AG04450 (cell line): ENCODE measurements at regions of chr4 and their contacts with region 1.

Region 1: DNA sequence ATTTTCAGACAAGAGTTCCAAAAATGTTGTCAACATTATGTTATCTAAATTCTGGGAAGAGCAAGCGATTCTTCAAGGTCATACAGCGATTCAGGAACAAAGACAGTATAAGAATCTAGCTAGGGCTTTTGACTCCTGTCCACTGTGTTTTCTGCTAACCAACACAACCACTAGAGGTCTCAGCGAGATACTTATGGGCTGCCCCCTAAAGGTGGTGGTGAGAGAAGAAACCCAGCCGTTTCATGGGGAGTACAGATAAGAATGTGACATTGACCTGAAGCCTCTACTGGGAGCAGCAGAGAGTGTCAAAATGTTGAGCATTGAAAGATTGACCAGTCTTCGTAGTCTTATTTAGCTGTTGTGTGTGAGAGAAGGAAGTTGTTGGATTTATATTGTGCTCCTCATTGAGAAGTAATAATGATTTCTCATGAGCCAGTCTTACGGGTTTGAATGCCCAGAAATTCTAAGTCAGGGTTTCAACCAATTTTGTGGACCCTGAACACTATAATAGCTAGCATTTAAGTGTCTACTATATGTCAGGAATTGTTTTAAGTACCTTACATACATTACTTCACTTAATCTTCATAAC is 168.3 kb downstream of the SPRY1 start:
- DNase-seq: peak; percentile 27
- H3K4me3 ChIP-seq: no peak overlapping the region
- H3K27ac ChIP-seq: no peak overlapping the region
- H3K27me3 ChIP-seq: no peaks in the 10 kb centered on the region
- CTCF ChIP-seq: peak; percentile 89

Region 2: DNA sequence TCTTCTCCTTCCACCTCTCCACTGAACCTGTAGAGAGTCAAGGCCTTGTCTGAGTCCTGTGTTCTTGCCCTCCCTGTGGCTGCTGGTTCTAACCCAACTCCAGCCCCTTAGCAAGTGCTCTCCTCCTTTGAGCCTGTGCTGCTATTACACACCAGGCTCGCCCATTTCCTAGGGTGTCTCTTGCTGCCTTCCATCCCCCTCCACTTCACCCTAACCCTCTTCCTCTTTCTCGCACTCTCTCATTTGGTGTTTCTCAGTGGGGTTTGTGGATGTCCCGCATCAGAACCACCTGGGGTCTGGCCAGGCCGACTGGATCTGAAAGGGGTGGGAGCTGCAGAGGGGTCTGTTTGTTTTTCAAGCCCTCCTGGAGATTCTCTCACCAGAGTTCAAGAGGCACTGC is 11.6 kb before region 1 on chr4:
- CTCF ChIA-PET with region 1: interaction called, 12 read pairs
- POLR2A ChIA-PET with region 1: no interaction called
- DNase-seq: no peak
- H3K4me3 ChIP-seq: no peak overlapping the region
- H3K27ac ChIP-seq: no peak overlapping the region
- H3K27me3 ChIP-seq: no peaks in the 10 kb centered on the region
- CTCF ChIP-seq: no peak

Region 3: GRCh38 chr4:123583043-123583442 is 18.2 kb after region 1 on chr4:
- CTCF ChIA-PET with region 1: interaction called, 10 read pairs
- POLR2A ChIA-PET with region 1: no interaction called
- DNase-seq: no peak
- H3K4me3 ChIP-seq: no peak overlapping the region
- H3K27ac ChIP-seq: no peak overlapping the region
- H3K27me3 ChIP-seq: no peaks in the 10 kb centered on the region
- CTCF ChIP-seq: no peak